PC-9 (cell line): ENCODE measurements at regions of chr2 and their contacts with region 1.

Region 1: GRCh38 chr2:143686585-143687164 is 557.5 kb downstream of the ARHGAP15 start:
- DNase-seq: no peak
- H3K4me3 ChIP-seq: no peak overlapping the region
- H3K27ac ChIP-seq: no peak overlapping the region
- H3K4me1 ChIP-seq: no peaks in the 10 kb centered on the region
- H3K27me3 ChIP-seq: no peaks in the 10 kb centered on the region
- CTCF ChIP-seq: peak; percentile 73

Region 2: GRCh38 chr2:143481728-143482127 is 204.9 kb before region 1 on chr2:
- CTCF ChIA-PET with region 1: interaction called, 17 read pairs
- POLR2A ChIA-PET with region 1: no interaction called
- intact Hi-C with region 1: no loop called
- DNase-seq: no peak
- H3K4me3 ChIP-seq: no peak overlapping the region
- H3K27ac ChIP-seq: no peak overlapping the region
- H3K4me1 ChIP-seq: no peaks in the 10 kb centered on the region
- H3K27me3 ChIP-seq: no peaks in the 10 kb centered on the region
- CTCF ChIP-seq: no peak

Region 3: DNA sequence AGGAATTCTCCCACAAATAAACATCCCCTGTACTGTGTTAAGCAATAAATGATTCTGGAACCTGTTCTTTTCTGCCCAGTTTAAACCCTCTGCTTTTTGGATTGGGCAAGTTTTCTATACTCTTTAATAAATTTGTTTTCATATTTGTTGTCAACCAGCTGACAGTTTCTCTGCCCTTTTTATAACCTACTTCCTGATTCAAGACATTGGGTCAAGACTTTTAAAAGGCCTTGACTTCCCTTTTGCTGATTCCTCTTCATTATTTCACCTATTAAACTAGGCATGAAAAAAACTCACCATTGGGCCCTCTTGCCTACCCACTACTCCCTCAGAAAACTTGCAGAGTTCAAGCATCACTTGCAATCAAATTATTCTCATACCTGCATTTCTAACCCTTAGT is 97.9 kb before region 1 on chr2:
- CTCF ChIA-PET with region 1: no interaction called
- POLR2A ChIA-PET with region 1: no interaction called
- intact Hi-C with region 1: no loop called
- DNase-seq: no peak
- H3K4me3 ChIP-seq: no peak overlapping the region
- H3K27ac ChIP-seq: no peak overlapping the region
- H3K4me1 ChIP-seq: no peaks in the 10 kb centered on the region
- H3K27me3 ChIP-seq: no peaks in the 10 kb centered on the region
- CTCF ChIP-seq: no peak

Region 4: GRCh38 chr2:143758629-143759330 is 72.1 kb after region 1 on chr2:
- CTCF ChIA-PET with region 1: no interaction called
- POLR2A ChIA-PET with region 1: no interaction called
- intact Hi-C with region 1: loop called (anchors 2 kb)
- DNase-seq: peak in 1 of 2 experiments; percentile 17
- H3K4me3 ChIP-seq: no peak overlapping the region
- H3K27ac ChIP-seq: no peak overlapping the region
- H3K4me1 ChIP-seq: no peaks in the 10 kb centered on the region
- H3K27me3 ChIP-seq: no peaks in the 10 kb centered on the region
- CTCF ChIP-seq: no peak

Region 5: GRCh38 chr2:143901185-143901842 is 214.6 kb after region 1 on chr2:
- CTCF ChIA-PET with region 1: no interaction called
- POLR2A ChIA-PET with region 1: no interaction called
- intact Hi-C with region 1: loop called (anchors 5 kb)
- DNase-seq: peak; percentile 69 to 96
- H3K4me3 ChIP-seq: peak overlapping the region; percentile 39; the same call in 1 of the 2 replicates
- H3K27ac ChIP-seq: peak overlapping the region; percentile 85
- H3K4me1 ChIP-seq: peaks cover 18% of the 10 kb centered on the region
- H3K27me3 ChIP-seq: no peaks in the 10 kb centered on the region
- CTCF ChIP-seq: no peak